Activated T-helper 1 cell treated with anti-CD3 and anti-CD28 coated beads, Interleukin-12 subunit alpha, Interleukin-12 subunit beta, Interleukin-2, Interleukin-4 antibody, amounts not matched to agents 30 ng/mL and 10 ng/mL and 1 ng/mL, durations not matched to agents 14 hours and 24 hours and 36 hours (primary cell): ENCODE measurements at regions of chr18 and their contacts with region 1.

Region 1: GRCh38 chr18:70205421-70206397 is at the start of gene RTTN:
- DNase-seq: peak; percentile 89
- H3K4me3 Mint-ChIP-seq: peak within 1 kb of the TSS; percentile 94
- H3K27ac Mint-ChIP-seq: peak within 1 kb of the TSS; percentile 98
- H3K4me1 Mint-ChIP-seq: peaks cover 32% of the 10 kb centered on the region
- H3K27me3 Mint-ChIP-seq: peaks cover 4% of the 10 kb centered on the region
- total RNA-seq, gene RTTN: 25.3 and 28.6 TPM in 2 replicates

Region 2: GRCh38 chr18:68847219-68847837 is 1358.4 kb before region 1 on chr18:
- intact Hi-C with region 1: loop called (anchors 10 kb)
- DNase-seq: no peak
- H3K4me3 Mint-ChIP-seq: no peak overlapping the region
- H3K27ac Mint-ChIP-seq: no peak overlapping the region
- H3K4me1 Mint-ChIP-seq: no peaks in the 10 kb centered on the region
- H3K27me3 Mint-ChIP-seq: no peaks in the 10 kb centered on the region

Region 3: GRCh38 chr18:69898241-69898861 is 307.4 kb before region 1 on chr18:
- intact Hi-C with region 1: loop called (anchors 5 kb)
- DNase-seq: no peak
- H3K4me3 Mint-ChIP-seq: peak overlapping the region; percentile 78
- H3K27ac Mint-ChIP-seq: peak overlapping the region; percentile 97
- H3K4me1 Mint-ChIP-seq: peaks cover 78% of the 10 kb centered on the region
- H3K27me3 Mint-ChIP-seq: no peaks in the 10 kb centered on the region

Region 4: GRCh38 chr18:70243131-70243530 is 37.4 kb after region 1 on chr18:
- intact Hi-C with region 1: no loop called
- DNase-seq: no peak
- H3K4me3 Mint-ChIP-seq: no peak overlapping the region
- H3K27ac Mint-ChIP-seq: no peak overlapping the region
- H3K4me1 Mint-ChIP-seq: no peaks in the 10 kb centered on the region
- H3K27me3 Mint-ChIP-seq: peaks cover 18% of the 10 kb centered on the region

Region 5: GRCh38 chr18:70288851-70289328 is 83.2 kb after region 1 on chr18 and contains the start of gene SOCS6:
- intact Hi-C with region 1: loop called (anchors 1 kb)
- DNase-seq: peak; percentile 41
- H3K4me3 Mint-ChIP-seq: peak within 1 kb of the TSS; percentile 90
- H3K27ac Mint-ChIP-seq: peak within 1 kb of the TSS; percentile 70
- H3K4me1 Mint-ChIP-seq: peaks cover 9% of the 10 kb centered on the region
- H3K27me3 Mint-ChIP-seq: peaks cover 29% of the 10 kb centered on the region
- total RNA-seq, gene SOCS6: 3.7 and 3.9 TPM in 2 replicates

Region 6: DNA sequence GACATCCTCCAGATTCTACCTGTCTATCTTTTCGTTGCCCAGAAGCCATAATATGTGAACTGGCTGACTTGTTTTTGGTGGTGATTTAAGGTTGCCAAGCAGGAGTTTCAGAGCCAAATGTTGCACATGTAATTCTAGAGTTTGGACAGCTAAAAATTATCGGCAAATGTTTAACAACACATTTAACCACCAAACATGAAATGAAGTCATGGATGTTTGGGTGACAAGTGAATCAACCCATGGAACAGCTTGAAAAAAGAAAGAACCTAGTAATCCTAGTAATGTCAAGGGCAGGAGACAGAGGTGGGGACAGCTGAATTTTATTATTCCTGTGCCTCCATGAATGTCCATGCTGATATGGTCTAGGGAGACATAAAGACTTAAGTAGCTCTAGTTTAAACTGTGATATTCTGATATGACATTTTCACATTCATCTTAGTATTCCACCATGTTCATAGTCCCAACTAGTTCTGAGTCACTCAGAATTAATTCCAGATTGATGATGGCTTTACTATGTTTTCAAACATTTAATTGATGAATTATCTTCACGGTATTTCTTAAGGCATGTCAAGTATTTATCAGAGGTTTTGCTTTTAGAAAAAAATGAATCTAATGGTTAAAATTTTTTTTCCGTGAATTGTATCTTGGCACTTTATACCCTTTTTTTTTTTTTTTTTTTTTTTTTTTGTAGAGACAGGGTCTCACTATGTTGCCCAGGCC is 184.8 kb after region 1 on chr18:
- intact Hi-C with region 1: no loop called
- DNase-seq: no peak
- H3K4me3 Mint-ChIP-seq: no peak overlapping the region
- H3K27ac Mint-ChIP-seq: no peak overlapping the region
- H3K4me1 Mint-ChIP-seq: no peaks in the 10 kb centered on the region
- H3K27me3 Mint-ChIP-seq: no peaks in the 10 kb centered on the region